MCF 10A (cell line): ENCODE measurements at regions of chr12 and their contacts with region 1.

Region 1: DNA sequence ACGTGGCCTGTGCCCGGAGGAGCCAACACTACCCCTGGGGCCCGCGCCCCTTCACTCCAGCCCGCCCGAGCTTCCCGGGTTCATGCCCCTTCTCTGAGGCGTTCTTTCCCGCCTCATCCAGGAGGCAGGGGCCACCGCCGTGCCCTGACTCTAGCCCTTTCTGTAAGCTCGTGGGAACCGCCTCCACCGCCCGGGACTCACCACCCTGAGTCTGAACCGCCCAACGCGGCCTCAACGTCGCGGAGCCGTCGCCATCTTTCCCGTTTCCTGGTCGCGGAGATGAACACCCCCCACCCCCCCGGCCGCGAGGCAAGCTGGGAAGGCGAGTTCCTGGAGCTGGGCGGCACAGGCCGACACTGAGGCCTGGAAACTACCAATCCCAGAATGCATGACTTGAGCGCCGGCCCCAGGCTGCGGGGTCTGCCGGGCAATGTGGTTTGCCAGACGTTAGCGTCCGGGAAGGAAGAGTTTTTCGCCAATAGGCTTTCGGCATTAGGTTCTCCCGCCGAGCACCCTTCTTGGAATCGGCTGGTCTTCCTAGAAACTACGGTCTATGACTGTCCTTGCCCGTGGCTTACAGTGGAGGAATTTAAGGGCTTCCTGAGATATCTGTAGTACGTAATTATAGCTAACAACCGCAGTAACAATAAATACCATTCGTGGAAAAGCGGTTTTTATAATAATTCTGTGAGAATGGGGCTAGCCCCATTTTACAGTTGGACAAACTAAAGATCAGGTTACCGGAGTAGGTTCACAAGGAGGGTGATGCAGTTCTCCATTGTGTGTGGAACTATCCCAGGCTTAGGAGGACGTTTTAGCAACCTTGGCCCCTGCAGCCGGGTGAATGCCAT is at the start of gene DDX23:
- DNase-seq: peak; percentile 98
- H3K4me3 Mint-ChIP-seq: peak within 1 kb of the TSS; percentile 97
- H3K27ac Mint-ChIP-seq: peak within 1 kb of the TSS; percentile 93
- H3K4me1 Mint-ChIP-seq: peaks cover 21% of the 10 kb centered on the region
- H3K27me3 Mint-ChIP-seq: no peaks in the 10 kb centered on the region
- CTCF ChIP-seq: no peak
- total RNA-seq, gene DDX23: 67.8 and 88.4 TPM in 2 replicates

Region 2: DNA sequence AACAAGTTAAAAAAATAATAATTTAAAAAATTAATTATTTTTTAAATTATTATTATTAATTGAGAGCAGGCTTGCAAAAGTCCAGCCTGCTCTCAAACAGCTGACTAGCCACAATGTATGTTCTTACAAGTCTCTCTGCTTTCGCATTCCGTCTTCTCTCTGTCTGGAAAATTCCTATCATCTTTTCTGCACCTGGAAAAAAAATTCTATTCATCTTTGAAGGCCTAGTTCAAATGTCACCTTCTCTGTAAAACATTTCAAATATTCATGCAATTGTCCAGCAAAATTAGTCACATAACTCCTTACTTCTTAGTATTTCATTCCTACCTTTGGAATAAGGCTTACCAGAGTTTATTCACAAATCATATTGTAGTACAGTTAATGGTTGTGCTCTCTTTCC is 1221.8 kb before region 1 on chr12:
- CTCF ChIA-PET with region 1: no interaction called
- POLR2A ChIA-PET with region 1: no interaction called
- intact Hi-C with region 1: no loop called
- DNase-seq: no peak
- H3K4me3 Mint-ChIP-seq: no peak overlapping the region
- H3K27ac Mint-ChIP-seq: no peak overlapping the region
- H3K4me1 Mint-ChIP-seq: no peaks in the 10 kb centered on the region
- H3K27me3 Mint-ChIP-seq: no peaks in the 10 kb centered on the region
- CTCF ChIP-seq: no peak

Region 3: DNA sequence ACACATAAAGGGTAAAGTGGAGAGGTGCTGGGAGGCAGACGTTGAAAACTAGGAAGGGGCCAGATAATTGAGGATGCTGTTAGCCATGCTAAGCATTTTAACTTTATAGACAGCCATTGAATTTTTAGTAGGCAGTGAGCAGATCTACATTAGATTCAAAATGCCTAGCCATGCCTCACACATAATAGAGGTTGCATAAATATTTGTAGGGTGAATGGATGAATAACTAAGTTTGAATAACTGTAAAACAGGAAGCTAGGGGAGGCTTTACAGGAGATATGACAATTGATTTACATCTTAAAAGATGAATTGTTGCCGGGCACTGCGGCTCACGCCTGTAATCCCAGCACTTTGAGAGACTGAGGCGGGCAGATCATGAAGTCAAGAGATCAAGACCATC is 123.3 kb before region 1 on chr12:
- CTCF ChIA-PET with region 1: no interaction called
- POLR2A ChIA-PET with region 1: no interaction called
- intact Hi-C with region 1: no loop called
- DNase-seq: no peak
- H3K4me3 Mint-ChIP-seq: no peak overlapping the region
- H3K27ac Mint-ChIP-seq: no peak overlapping the region
- H3K4me1 Mint-ChIP-seq: no peaks in the 10 kb centered on the region
- H3K27me3 Mint-ChIP-seq: no peaks in the 10 kb centered on the region
- CTCF ChIP-seq: no peak

Region 4: DNA sequence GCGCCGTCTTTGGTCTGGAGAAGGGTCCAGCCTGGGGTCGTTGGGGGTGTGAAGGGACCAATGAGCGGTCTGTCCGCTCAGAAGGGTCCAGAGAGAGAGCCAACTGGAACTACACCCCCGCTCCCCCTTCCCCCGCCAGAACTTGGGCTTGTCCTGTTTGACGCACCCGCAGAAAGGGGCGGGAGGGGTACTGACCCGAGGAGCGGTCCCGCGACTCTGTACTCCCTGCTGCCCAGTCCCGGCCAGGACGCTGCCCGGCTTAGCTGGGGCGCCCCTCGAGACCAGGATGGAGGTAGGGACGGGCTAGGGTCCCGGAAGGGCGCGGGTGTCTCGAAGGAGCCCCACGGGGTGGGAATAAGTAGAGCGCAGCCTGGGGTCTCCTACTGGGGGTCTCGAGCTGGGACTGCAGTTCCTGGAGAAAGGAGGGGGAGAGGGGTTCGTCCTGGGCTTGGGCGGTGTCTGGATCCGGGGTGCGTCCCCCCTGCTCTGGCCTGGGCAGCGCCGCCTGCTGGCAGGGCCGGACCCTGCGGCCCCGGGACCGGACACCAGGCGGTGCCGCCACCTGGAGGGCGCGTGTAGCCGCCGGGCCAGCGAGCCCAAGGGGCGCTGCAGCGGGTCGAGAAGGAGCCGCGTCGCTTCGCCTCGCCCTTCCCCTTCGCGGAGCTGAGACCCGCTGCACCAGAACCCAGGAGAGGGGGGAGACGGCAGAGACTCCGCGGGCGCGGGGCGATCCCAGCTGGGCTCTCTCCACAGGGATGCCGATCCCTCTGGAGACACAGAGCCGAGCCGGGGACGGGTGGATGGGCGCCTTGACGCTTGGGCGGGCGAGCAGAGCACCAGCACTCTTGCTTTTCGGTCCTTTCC is 37.6 kb before region 1 on chr12:
- CTCF ChIA-PET with region 1: interaction called, 17 read pairs
- POLR2A ChIA-PET with region 1: interaction called, 45 read pairs
- intact Hi-C with region 1: no loop called
- DNase-seq: peak; percentile 77
- H3K4me3 Mint-ChIP-seq: peak overlapping the region; percentile 85
- H3K27ac Mint-ChIP-seq: peak overlapping the region; percentile 75
- H3K4me1 Mint-ChIP-seq: peaks cover 24% of the 10 kb centered on the region
- H3K27me3 Mint-ChIP-seq: no peaks in the 10 kb centered on the region
- CTCF ChIP-seq: peak; percentile 97

Region 5: GRCh38 chr12:48882315-48882687 is 30.2 kb after region 1 on chr12:
- CTCF ChIA-PET with region 1: interaction called, 114 read pairs
- POLR2A ChIA-PET with region 1: interaction called, 3 read pairs
- intact Hi-C with region 1: no loop called
- DNase-seq: no peak
- H3K4me3 Mint-ChIP-seq: no peak overlapping the region
- H3K27ac Mint-ChIP-seq: no peak overlapping the region
- H3K4me1 Mint-ChIP-seq: peaks cover 8% of the 10 kb centered on the region
- H3K27me3 Mint-ChIP-seq: peaks cover 27% of the 10 kb centered on the region
- CTCF ChIP-seq: no peak

Region 6: DNA sequence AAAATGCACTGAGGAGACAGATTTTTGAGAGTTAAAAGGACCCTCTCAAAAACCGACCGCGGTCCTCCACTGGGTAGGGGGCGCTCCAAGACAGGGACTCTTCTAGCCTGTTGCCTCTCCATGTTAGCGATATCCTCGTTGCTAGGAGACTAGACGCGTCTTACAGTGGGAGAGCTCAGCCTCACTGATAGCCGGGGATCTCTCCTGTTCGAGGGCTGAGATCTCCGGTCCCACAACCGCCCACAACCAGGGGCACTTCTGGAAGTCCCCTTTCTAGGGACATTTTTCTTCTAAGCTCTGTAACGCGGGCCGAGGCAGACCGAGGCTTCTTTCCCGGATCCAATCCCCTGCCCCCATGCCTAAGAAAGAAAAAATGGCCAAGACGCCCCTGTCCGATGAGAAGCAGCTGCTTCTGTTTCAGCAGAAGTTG is 51.9 kb after region 1 on chr12:
- CTCF ChIA-PET with region 1: interaction called, 20 read pairs
- POLR2A ChIA-PET with region 1: interaction called, 3 read pairs
- intact Hi-C with region 1: no loop called
- DNase-seq: peak; percentile 59
- H3K4me3 Mint-ChIP-seq: peak overlapping the region; percentile 61
- H3K27ac Mint-ChIP-seq: no peak overlapping the region
- H3K4me1 Mint-ChIP-seq: no peaks in the 10 kb centered on the region
- H3K27me3 Mint-ChIP-seq: no peaks in the 10 kb centered on the region
- CTCF ChIP-seq: peak; percentile 23

Region 7: GRCh38 chr12:48957141-48958048 is 105.3 kb after region 1 on chr12 and contains the start of gene ARF3:
- CTCF ChIA-PET with region 1: interaction called, 14 read pairs
- POLR2A ChIA-PET with region 1: interaction called, 20 read pairs
- intact Hi-C with region 1: no loop called
- DNase-seq: peak; percentile 92
- H3K4me3 Mint-ChIP-seq: peak within 1 kb of the TSS; percentile 99
- H3K27ac Mint-ChIP-seq: peak within 1 kb of the TSS; percentile 93
- H3K4me1 Mint-ChIP-seq: peaks cover 34% of the 10 kb centered on the region
- H3K27me3 Mint-ChIP-seq: no peaks in the 10 kb centered on the region
- CTCF ChIP-seq: no peak
- total RNA-seq, gene ARF3: 117 and 129 TPM in 2 replicates

Region 8: DNA sequence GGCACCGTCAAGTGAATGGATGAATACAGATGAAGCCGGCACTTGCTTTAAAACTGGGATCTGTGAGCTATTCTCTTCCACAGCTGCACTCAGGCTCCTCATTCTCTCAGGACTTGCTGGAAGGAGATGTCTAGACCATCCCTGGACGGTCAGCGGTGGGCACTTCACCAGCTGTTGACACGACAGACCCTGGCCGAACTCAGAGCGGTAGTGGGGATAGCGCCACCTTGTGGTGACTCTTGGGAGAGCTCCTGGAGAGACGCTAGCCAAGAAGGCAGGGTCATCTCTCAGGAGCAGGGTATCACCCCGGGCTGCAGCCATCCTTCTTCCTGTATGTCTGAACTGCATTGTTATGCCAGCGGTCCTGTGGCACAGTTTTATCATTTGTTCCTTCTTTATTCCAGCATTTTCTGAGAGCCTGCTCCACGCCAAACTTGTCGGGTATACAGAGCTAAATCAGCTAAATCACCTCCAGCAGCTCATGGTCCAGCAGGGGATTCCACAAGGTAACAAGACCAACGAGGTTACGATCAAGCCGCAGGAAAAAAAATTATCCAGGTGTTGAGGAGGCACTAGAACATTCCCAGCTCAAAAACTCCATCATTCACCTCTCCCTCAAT is 136.0 kb after region 1 on chr12:
- CTCF ChIA-PET with region 1: interaction called, 37 read pairs
- POLR2A ChIA-PET with region 1: interaction called, 11 read pairs
- intact Hi-C with region 1: no loop called
- DNase-seq: peak; percentile 60
- H3K4me3 Mint-ChIP-seq: no peak overlapping the region
- H3K27ac Mint-ChIP-seq: no peak overlapping the region
- H3K4me1 Mint-ChIP-seq: no peaks in the 10 kb centered on the region
- H3K27me3 Mint-ChIP-seq: peaks cover 61% of the 10 kb centered on the region
- CTCF ChIP-seq: peak; percentile 89

Region 9: DNA sequence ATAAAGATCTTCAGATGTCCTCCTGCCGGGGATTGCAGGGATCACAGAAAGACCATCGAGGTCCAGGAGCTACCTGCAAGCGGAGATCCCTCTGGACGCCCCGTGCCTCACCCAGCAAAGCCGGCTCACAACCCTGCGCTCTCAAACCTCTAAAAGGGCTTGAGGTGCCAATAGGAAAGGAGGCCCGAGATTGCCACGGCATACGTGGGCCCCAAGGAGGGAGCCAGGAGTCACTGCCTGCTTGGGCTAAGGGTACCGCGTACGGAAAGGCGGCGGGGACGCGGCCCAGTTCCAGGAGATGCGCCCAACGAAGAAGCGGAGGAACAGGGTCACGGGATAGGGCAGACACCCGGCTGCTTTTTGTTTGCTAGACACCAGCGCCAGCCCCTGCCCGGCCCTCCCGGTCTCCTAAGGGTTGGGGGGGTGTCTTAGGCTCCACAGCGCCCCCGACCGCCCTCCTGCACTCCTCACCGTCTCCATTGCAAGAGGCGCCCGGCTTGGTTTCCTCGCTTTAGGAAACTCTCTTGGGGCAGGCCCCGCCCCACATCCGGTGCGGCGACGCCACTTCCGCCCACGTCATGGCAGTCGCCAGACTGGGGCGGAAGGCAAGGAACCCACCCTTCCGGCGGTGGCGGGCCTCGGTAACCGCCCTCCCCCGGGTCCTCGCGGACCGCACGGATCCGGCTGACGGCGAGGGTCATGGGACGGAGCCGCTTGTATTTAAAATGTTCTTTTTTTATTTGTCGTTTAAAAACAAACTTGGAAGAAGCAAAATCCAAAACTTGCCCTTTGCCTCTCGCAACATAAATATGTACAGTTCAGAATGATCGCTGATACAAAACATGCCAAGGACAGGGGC is 166.4 kb after region 1 on chr12 and contains the start of gene PRKAG1:
- CTCF ChIA-PET with region 1: interaction called, 11 read pairs
- POLR2A ChIA-PET with region 1: interaction called, 8 read pairs
- intact Hi-C with region 1: no loop called
- DNase-seq: peak; percentile 96
- H3K4me3 Mint-ChIP-seq: peak within 1 kb of the TSS; percentile 88
- H3K27ac Mint-ChIP-seq: peak within 1 kb of the TSS; percentile 99
- H3K4me1 Mint-ChIP-seq: peaks cover 15% of the 10 kb centered on the region
- H3K27me3 Mint-ChIP-seq: no peaks in the 10 kb centered on the region
- CTCF ChIP-seq: peak; percentile 25
- total RNA-seq, gene PRKAG1: 80.3 and 84.6 TPM in 2 replicates

Region 10: GRCh38 chr12:49146406-49146805 is 294.3 kb after region 1 on chr12:
- CTCF ChIA-PET with region 1: no interaction called
- POLR2A ChIA-PET with region 1: no interaction called
- intact Hi-C with region 1: no loop called
- DNase-seq: no peak
- H3K4me3 Mint-ChIP-seq: no peak overlapping the region
- H3K27ac Mint-ChIP-seq: no peak overlapping the region
- H3K4me1 Mint-ChIP-seq: no peaks in the 10 kb centered on the region
- H3K27me3 Mint-ChIP-seq: no peaks in the 10 kb centered on the region
- CTCF ChIP-seq: no peak